ENCODE measurements at regions of chr9 and their contacts with region 1.

Region 1: GRCh38 chr9:97921959-97922724 is at the start of gene TRMO:
- DNase-seq: peak; percentile 93
- H3K4me3 ChIP-seq: peak within 1 kb of the TSS; percentile 55 to 91 (median 62)
- H3K27ac ChIP-seq: peak within 1 kb of the TSS; percentile 96 to 99 (median 98)
- H3K4me1 ChIP-seq: peaks cover 9 to 48% (median 17%) of the 10 kb centered on the region in 3 donors
- H3K27me3 ChIP-seq: peaks cover 0 to 5% (median 0%) of the 10 kb centered on the region in 4 donors
- CTCF ChIP-seq: peak; percentile 23 to 77 (median 50)
- POLR2A ChIP-seq: peak in 3 of 4 donors; percentile 40 to 86 (median 84)
- total RNA-seq, gene TRMO: 16.0 to 41.1 (median 20.7) TPM

Region 2: GRCh38 chr9:98034593-98035546 is 112.7 kb after region 1 on chr9:
- intact Hi-C with region 1: loop called (anchors 10 kb)
- DNase-seq: peak; percentile 27
- H3K4me3 ChIP-seq: peak overlapping the region in 1 of 4 donors; percentile 12
- H3K27ac ChIP-seq: peak overlapping the region in 2 of 4 donors; percentile 42 to 62
- H3K4me1 ChIP-seq: peaks cover 3 to 25% (median 5%) of the 10 kb centered on the region in 3 donors
- H3K27me3 ChIP-seq: no peaks in the 10 kb centered on the region
- CTCF ChIP-seq: peak; percentile 74 to 86 (median 76)
- POLR2A ChIP-seq: no peak

Measured in esophagus squamous epithelium (tissue), 5 donors.